Aorta (tissue), 5 donors: ENCODE measurements at regions of chr6 and their contacts with region 1.

Region 1: DNA sequence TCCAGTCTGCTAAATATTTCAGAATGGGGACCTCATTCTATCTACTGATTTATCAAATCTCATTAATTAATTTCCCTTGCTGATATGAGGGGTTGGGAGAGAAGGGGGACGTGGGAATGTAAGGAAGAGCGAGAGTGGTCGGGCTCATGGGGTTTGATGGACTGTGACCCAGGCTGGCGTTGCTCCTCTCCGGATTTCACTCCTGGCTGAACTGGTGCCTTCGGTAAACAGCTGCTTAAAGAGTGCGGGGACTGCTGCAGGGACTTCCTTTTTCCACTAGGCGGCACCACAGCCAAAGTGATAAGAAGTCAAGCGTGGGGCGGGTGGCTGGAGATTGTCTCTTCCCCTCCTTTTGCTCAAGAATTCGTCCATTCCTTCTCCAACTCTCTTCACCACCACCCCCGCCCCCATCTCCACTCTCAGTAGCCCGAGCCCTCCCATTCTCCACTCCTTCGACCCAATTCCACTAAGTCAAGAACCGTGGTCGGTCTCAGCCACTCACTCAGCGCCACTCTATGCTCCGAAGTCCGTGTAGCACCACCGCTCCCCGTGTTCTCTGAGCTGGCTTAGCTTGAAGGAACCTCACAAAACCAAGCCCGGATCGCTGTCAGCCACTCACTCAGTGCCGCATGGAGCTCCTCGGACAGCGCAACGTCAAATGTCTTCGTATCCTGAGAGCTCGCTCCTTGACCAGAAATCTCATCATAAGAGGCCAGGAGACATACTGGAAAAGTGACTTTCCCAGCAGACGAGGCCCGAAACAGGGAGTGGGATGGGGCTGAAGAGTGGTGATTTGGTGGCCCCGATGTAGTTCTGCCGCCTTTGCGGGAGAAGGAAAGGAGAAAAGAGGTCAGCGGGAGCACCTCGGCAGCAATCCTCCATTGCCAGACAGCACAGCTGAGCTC is 9.7 kb downstream of the TRIM31 start:
- DNase-seq: peak; percentile 90 to 92
- ATAC-seq: peak; percentile 93
- H3K4me3 ChIP-seq: peak overlapping the region in 1 of 2 donors; percentile 1
- H3K27ac ChIP-seq: no peak overlapping the region
- H3K4me1 ChIP-seq: no peaks in the 10 kb centered on the region
- H3K27me3 ChIP-seq: peaks cover 0 to under 1% of the 10 kb centered on the region in 2 donors

Region 2: DNA sequence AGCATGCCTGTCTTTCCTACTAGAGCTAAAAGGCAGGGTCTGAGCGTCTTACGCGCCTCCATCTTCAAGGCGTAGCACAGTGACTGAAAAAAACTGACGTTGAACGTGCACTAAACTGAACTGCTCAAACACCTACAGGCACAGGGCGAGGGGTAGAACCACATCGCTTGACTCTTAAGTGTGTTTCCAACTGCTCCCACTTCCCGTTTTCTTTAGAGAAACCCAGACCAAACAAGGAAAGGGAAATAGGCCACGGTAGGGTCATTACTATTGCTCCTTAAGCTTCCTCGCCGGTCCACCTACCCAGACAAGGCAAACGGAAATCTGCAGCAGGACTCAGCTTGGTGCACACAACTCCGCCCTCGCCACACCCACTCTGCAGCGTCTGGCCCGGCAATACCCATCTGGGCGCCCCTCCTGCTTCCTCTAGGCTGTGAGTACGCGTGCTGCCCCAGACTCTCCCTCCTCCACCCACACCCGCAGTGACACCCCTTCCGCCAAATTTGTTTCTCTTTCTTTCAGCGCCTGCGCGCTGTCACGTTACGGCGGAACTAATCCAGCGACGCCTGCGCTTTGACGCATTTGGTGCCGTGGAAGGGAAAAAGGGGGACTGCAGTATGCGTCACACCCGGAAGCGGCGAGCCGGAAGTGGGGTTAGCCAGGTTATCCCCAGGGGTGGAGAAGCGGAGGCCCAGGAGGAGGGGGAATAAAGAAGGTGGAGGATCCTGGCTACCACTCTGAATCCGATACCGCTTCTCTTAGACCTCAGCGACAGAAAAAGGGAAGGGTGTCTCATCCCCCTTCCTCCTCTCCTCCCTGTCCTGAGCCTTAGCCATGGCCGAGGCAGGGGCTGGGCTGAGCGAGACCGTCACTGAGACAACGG is 36.4 kb before region 1 on chr6 and contains the start of gene PPP1R11:
- intact Hi-C with region 1: loop called in 1 of 2 experiments (anchors 1 kb)
- DNase-seq: peak; percentile 98 to 99
- ATAC-seq: peak; percentile 99
- H3K4me3 ChIP-seq: peak within 1 kb of the TSS; percentile 55 to 91
- H3K27ac ChIP-seq: peak within 1 kb of the TSS; percentile 59 to 89
- H3K4me1 ChIP-seq: peaks cover 0 to 2% of the 10 kb centered on the region in 2 donors
- H3K27me3 ChIP-seq: no peaks in the 10 kb centered on the region
- total RNA-seq, gene PPP1R11: 40.0 to 43.8 TPM

Region 3: DNA sequence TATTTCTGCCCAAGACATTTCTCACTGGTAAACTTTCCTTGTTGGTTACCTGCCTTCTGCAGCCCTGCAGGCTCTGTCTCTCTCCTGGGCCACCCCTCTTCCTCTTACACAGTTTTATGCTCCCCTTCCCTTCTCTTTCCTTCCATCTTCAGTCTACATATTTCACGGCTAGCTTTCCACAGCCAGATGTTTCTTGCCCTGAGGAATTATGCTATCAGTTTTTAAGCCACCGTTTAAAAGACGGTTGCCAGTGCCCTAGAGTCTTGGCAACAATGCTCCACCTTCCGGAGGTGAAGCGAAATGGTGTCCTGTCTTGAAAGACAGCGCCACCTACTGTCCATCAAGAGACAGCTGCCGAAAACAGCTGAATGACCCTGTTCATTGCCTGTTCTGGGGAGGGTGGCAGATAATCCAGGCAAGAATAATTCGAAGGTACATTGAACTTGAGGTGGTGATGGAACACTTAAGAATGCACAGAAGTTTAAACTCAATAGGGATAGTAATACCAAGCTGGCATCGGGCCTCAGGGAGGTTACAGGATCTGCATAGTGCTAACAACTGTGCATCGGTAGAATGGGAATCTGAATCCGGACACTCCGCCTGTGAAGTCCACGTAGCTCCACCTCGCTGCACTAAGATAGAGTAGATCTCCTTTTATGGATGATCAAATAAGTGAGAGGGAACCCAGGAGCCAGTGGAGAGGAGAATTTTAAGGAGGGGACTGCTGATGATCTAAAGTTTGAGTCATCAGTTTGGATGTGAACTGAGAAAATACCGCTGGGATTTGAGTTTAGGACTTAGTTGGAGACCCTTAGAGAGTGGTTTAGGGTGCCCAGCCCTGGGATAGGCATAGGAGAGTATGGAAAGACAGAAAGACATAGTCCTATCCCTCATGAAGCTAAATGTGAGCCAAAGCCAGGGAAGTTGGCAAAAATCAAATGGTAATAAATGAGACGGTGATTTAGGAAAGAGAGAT is 28.0 kb after region 1 on chr6:
- intact Hi-C with region 1: loop called (anchors 1 to 2 kb)
- DNase-seq: peak in 1 of 2 donors; percentile 62
- ATAC-seq: peak; percentile 88
- H3K4me3 ChIP-seq: no peak overlapping the region
- H3K27ac ChIP-seq: no peak overlapping the region
- H3K4me1 ChIP-seq: no peaks in the 10 kb centered on the region
- H3K27me3 ChIP-seq: no peaks in the 10 kb centered on the region